Activated naive CD4-positive, alpha-beta T cell treated with anti-CD3 and anti-CD28 coated beads, Interleukin-2, amount 10 ng/mL, durations not matched to agents 7 days and 5 days (primary cell): ENCODE measurements at regions of chr11 and their contacts with region 1.

Region 1: GRCh38 chr11:122655527-122656072 is at the start of gene UBASH3B:
- DNase-seq: peak; percentile 74
- H3K4me3 Mint-ChIP-seq: peak within 1 kb of the TSS; percentile 92
- H3K27ac Mint-ChIP-seq: peak within 1 kb of the TSS; percentile 85
- H3K4me1 Mint-ChIP-seq: peaks cover 23% of the 10 kb centered on the region
- H3K27me3 Mint-ChIP-seq: peaks cover 63% of the 10 kb centered on the region

Region 2: GRCh38 chr11:122486793-122487495 is 168.7 kb before region 1 on chr11:
- CTCF ChIA-PET with region 1: no interaction called
- DNase-seq: no peak
- H3K4me3 Mint-ChIP-seq: no peak overlapping the region
- H3K27ac Mint-ChIP-seq: no peak overlapping the region
- H3K4me1 Mint-ChIP-seq: no peaks in the 10 kb centered on the region
- H3K27me3 Mint-ChIP-seq: no peaks in the 10 kb centered on the region

Region 3: GRCh38 chr11:122697636-122698167 is 42.1 kb after region 1 on chr11:
- CTCF ChIA-PET with region 1: interaction called, 17 read pairs
- DNase-seq: peak; percentile 63
- H3K4me3 Mint-ChIP-seq: peak overlapping the region; percentile 11
- H3K27ac Mint-ChIP-seq: peak overlapping the region; percentile 85
- H3K4me1 Mint-ChIP-seq: peaks cover 64% of the 10 kb centered on the region
- H3K27me3 Mint-ChIP-seq: peaks cover 3% of the 10 kb centered on the region

Region 4: DNA sequence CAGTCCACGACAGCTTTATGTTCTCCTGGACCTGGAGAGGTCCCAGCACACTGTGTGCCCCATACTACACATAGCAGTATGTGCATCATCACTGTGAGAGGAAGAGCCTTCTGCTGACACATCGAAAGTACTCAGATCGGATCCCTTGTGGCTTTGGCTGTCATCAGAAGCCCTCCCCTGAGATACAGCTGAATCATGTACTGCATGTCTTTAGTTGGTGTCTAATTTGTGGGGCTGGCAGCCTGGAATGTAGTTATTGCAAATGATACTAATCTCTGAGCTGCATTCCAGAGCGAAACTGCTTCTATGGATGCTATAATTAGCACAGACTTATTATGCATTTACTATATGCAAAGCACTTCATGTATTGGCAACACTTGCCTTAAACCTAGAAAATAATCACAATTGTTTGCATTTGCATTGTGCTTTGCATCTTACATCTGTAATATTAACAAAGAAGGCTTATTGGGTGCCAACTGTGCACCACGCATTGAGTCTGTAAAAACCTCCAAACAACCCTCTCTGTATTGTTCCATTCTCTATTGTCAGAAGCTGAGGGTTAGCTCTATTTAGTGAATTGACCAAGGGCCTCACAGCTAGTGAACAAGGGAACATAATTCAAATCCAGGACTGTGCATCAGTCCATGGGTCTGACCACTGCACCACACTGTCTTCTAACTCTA is 93.5 kb after region 1 on chr11:
- CTCF ChIA-PET with region 1: interaction called, 62 read pairs
- DNase-seq: peak; percentile 64
- H3K4me3 Mint-ChIP-seq: no peak overlapping the region
- H3K27ac Mint-ChIP-seq: no peak overlapping the region
- H3K4me1 Mint-ChIP-seq: peaks cover 31% of the 10 kb centered on the region
- H3K27me3 Mint-ChIP-seq: peaks cover 6% of the 10 kb centered on the region

Region 5: GRCh38 chr11:122781378-122782195 is 126.0 kb after region 1 on chr11:
- CTCF ChIA-PET with region 1: interaction called, 15 read pairs
- DNase-seq: peak; percentile 80
- H3K4me3 Mint-ChIP-seq: no peak overlapping the region
- H3K27ac Mint-ChIP-seq: no peak overlapping the region
- H3K4me1 Mint-ChIP-seq: peaks cover 3% of the 10 kb centered on the region
- H3K27me3 Mint-ChIP-seq: no peaks in the 10 kb centered on the region